IMR-90 (cell line): ENCODE measurements at regions of chr18 and their contacts with region 1.

Region 1: GRCh38 chr18:25896178-25896780 is 194.1 kb downstream of the SS18 start:
- DNase-seq: peak; percentile 58
- ATAC-seq: peak; percentile 87
- H3K4me3 ChIP-seq: no peak overlapping the region
- H3K27ac ChIP-seq: no peak overlapping the region
- H3K4me1 ChIP-seq: no peaks in the 10 kb centered on the region
- H3K27me3 ChIP-seq: peaks cover 6% of the 10 kb centered on the region
- CTCF ChIP-seq: peak; percentile 83
- POLR2A ChIP-seq: no peak
- RAD21 ChIP-seq: peak; percentile 87

Region 2: DNA sequence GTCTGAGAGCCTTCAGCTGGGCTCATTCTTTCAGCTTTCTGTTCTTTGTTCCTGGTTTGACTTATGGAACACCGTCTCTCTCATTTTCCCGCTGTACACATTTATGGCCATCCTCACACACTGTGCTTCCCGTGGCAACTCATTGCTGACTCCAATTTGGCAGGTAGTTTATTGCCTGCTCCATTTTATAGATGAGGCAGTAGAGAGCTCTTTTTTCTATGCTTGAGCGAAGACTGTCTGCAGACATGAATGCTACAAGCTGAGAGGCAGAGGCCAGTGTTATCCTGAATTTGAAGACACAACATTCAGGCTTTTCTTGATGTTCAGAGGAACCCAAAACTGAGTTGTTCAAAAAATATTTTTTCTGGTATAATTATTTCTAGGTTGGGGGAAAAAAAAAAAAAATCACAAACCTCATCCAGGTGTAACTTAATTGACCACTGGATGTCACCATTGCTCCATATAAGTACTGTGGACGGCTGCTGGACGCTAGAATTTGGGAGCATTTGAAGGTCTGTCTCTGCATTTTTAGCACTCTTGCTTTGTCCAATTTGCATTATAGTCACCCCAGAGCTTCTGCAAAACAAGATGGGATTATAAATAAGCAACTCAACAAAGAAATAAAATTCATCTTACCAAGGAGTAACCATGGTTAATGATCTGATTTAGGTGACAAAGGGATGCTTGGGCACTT is 1352.3 kb before region 1 on chr18:
- CTCF ChIA-PET with region 1: no interaction called
- POLR2A ChIA-PET with region 1: no interaction called
- dilution Hi-C with region 1: no loop called
- in situ Hi-C with region 1: no loop called
- intact Hi-C with region 1: loop called (anchors 10 kb)
- DNase-seq: peak; percentile 40
- ATAC-seq: peak; percentile 64
- H3K4me3 ChIP-seq: no peak overlapping the region
- H3K27ac ChIP-seq: no peak overlapping the region
- H3K4me1 ChIP-seq: no peaks in the 10 kb centered on the region
- H3K27me3 ChIP-seq: peaks cover 19% of the 10 kb centered on the region
- CTCF ChIP-seq: peak; percentile 62
- POLR2A ChIP-seq: no peak
- RAD21 ChIP-seq: peak; percentile 67

Region 3: DNA sequence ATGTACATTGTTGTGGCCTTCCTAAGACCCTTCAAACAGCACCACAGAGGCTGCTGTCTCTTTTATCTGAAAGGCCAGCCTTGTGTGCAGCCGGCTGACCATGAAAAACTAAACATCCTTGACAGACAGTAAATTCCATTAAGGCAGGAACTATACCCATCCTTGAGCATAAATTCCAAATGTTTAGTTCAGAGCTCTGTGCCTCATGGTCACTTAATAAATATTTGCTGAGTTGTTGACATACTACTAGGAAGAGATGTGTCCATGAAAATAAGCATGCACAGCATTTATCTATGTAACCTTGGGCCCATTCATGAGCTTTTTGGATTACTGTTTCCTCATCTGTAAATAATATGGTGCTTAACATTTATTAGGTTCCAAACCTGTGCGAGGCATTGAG is 1011.0 kb before region 1 on chr18:
- CTCF ChIA-PET with region 1: no interaction called
- POLR2A ChIA-PET with region 1: no interaction called
- dilution Hi-C with region 1: no loop called
- in situ Hi-C with region 1: loop called (anchors 10 kb)
- intact Hi-C with region 1: no loop called
- DNase-seq: no peak
- ATAC-seq: peak; percentile 64
- H3K4me3 ChIP-seq: no peak overlapping the region
- H3K27ac ChIP-seq: no peak overlapping the region
- H3K4me1 ChIP-seq: peaks cover 2% of the 10 kb centered on the region; the same call in 1 of the 2 replicates
- H3K27me3 ChIP-seq: no peaks in the 10 kb centered on the region
- CTCF ChIP-seq: no peak
- POLR2A ChIP-seq: no peak
- RAD21 ChIP-seq: no peak

Region 4: GRCh38 chr18:25561918-25562317 is 334.4 kb before region 1 on chr18:
- CTCF ChIA-PET with region 1: no interaction called
- POLR2A ChIA-PET with region 1: no interaction called
- dilution Hi-C with region 1: no loop called
- in situ Hi-C with region 1: no loop called
- intact Hi-C with region 1: loop called (anchors 1 kb)
- DNase-seq: peak; percentile 33
- ATAC-seq: no peak
- H3K4me3 ChIP-seq: no peak overlapping the region
- H3K27ac ChIP-seq: no peak overlapping the region
- H3K4me1 ChIP-seq: no peaks in the 10 kb centered on the region
- H3K27me3 ChIP-seq: peaks cover 2% of the 10 kb centered on the region; the same call in 1 of the 2 replicates
- CTCF ChIP-seq: peak; percentile 36
- POLR2A ChIP-seq: no peak
- RAD21 ChIP-seq: peak; percentile 45

Region 5: DNA sequence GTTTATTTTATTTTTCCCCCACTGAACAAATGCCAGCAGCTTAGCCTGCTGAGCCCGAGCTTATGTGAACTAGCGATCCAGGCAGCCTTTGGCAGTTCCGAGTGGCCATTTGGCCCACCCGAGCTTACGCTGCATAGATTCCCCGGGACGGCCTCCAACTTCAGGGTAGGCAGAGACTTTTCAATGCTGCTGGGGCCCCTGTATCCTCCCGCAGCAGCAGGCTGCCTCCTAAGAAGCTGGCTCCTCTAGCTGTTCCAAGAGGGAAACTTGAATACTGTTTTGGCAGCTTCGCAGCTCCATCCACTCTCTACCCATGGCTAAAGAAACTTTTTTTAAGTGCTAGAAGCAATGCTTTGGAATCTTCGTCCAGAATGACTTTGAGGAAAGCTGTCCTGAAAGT is 101.1 kb before region 1 on chr18:
- CTCF ChIA-PET with region 1: no interaction called
- POLR2A ChIA-PET with region 1: no interaction called
- dilution Hi-C with region 1: no loop called
- in situ Hi-C with region 1: no loop called
- intact Hi-C with region 1: no loop called
- DNase-seq: no peak
- ATAC-seq: no peak; the same call in 1 of the 2 replicates
- H3K4me3 ChIP-seq: no peak overlapping the region
- H3K27ac ChIP-seq: no peak overlapping the region
- H3K4me1 ChIP-seq: peaks cover 4% of the 10 kb centered on the region
- H3K27me3 ChIP-seq: no peaks in the 10 kb centered on the region
- CTCF ChIP-seq: no peak
- POLR2A ChIP-seq: no peak
- RAD21 ChIP-seq: no peak

Region 6: GRCh38 chr18:25976554-25976953 is 80.3 kb after region 1 on chr18:
- CTCF ChIA-PET with region 1: no interaction called
- POLR2A ChIA-PET with region 1: no interaction called
- dilution Hi-C with region 1: no loop called
- in situ Hi-C with region 1: no loop called
- intact Hi-C with region 1: no loop called
- DNase-seq: peak; percentile 17
- ATAC-seq: peak; percentile 61
- H3K4me3 ChIP-seq: no peak overlapping the region
- H3K27ac ChIP-seq: no peak overlapping the region
- H3K4me1 ChIP-seq: no peaks in the 10 kb centered on the region; the same call in 1 of the 2 replicates
- H3K27me3 ChIP-seq: no peaks in the 10 kb centered on the region
- CTCF ChIP-seq: no peak
- POLR2A ChIP-seq: no peak
- RAD21 ChIP-seq: no peak

Region 7: GRCh38 chr18:26017929-26018328 is 121.7 kb after region 1 on chr18:
- CTCF ChIA-PET with region 1: no interaction called
- POLR2A ChIA-PET with region 1: no interaction called
- dilution Hi-C with region 1: no loop called
- in situ Hi-C with region 1: no loop called
- intact Hi-C with region 1: no loop called
- DNase-seq: no peak
- ATAC-seq: no peak
- H3K4me3 ChIP-seq: no peak overlapping the region
- H3K27ac ChIP-seq: no peak overlapping the region
- H3K4me1 ChIP-seq: no peaks in the 10 kb centered on the region
- H3K27me3 ChIP-seq: no peaks in the 10 kb centered on the region
- CTCF ChIP-seq: no peak
- POLR2A ChIP-seq: no peak
- RAD21 ChIP-seq: no peak